Caco-2 (cell line): ENCODE measurements at regions of chrX and their contacts with region 1.

Region 1: GRCh38 chrX:74133156-74133796 is 170.7 kb upstream of the ZCCHC13 start:
- DNase-seq: peak in 1 of 2 experiments; percentile 44
- H3K4me3 ChIP-seq: no peak overlapping the region
- H3K4me3 Mint-ChIP-seq: no peak overlapping the region
- H3K27ac Mint-ChIP-seq: no peak overlapping the region
- H3K4me1 ChIP-seq: no peaks in the 10 kb centered on the region
- H3K4me1 Mint-ChIP-seq: no peaks in the 10 kb centered on the region
- H3K27me3 ChIP-seq: no peaks in the 10 kb centered on the region
- H3K27me3 Mint-ChIP-seq: no peaks in the 10 kb centered on the region
- CTCF ChIP-seq: peak; percentile 39 to 50

Region 2: DNA sequence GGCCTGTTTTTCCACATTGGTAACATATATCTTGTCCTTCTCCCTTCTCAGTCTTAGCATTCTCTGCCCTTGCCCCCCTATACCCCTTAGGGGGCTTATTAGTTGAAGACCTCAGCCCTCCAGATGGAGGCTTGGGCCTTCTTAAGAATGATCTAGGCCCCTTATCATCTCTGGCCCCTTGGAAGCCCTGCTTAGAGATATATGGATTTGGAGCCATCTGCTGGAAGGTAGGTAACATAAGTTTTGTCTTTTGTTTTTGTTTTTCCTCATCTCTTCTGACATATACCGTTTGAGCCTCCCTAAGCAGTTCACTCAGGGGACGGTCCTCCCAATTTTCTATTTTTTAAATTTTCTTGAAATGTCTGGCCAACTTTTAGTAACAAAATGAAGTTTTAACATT is 870.3 kb before region 1 on chrX:
- CTCF ChIA-PET with region 1: no interaction called
- POLR2A ChIA-PET with region 1: no interaction called
- intact Hi-C with region 1: loop called (anchors 5 kb)
- DNase-seq: peak in 1 of 2 experiments; percentile 0
- H3K4me3 ChIP-seq: no peak overlapping the region
- H3K4me3 Mint-ChIP-seq: no peak overlapping the region
- H3K27ac Mint-ChIP-seq: no peak overlapping the region
- H3K4me1 ChIP-seq: no peaks in the 10 kb centered on the region
- H3K4me1 Mint-ChIP-seq: no peaks in the 10 kb centered on the region
- H3K27me3 ChIP-seq: no peaks in the 10 kb centered on the region
- H3K27me3 Mint-ChIP-seq: peaks cover 3% of the 10 kb centered on the region
- CTCF ChIP-seq: peak in 1 of 2 experiments; percentile 0

Region 3: DNA sequence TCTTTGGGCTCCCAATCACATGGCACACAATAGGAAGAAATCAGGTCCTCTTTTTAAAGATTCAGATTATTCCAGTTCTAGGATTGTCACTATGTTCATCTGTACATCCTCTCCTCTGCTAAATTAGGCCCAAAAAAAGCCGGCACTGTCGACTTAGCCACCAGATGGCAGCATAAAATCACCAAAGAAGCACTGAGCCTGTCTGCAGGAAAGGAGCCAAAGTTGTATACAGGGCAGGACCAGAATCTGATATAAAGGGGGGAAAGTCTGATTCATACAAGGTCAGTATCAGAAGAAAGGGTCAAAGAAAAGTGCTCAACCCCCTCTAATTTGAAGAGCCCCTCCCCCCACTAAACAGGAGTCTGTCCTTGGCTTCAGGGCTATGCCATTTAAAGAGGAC is 277.7 kb before region 1 on chrX:
- CTCF ChIA-PET with region 1: no interaction called
- POLR2A ChIA-PET with region 1: no interaction called
- intact Hi-C with region 1: loop called (anchors 1 kb)
- DNase-seq: peak; percentile 43 to 64
- H3K4me3 ChIP-seq: no peak overlapping the region
- H3K4me3 Mint-ChIP-seq: no peak overlapping the region
- H3K27ac Mint-ChIP-seq: no peak overlapping the region
- H3K4me1 ChIP-seq: no peaks in the 10 kb centered on the region
- H3K4me1 Mint-ChIP-seq: no peaks in the 10 kb centered on the region
- H3K27me3 ChIP-seq: no peaks in the 10 kb centered on the region
- H3K27me3 Mint-ChIP-seq: no peaks in the 10 kb centered on the region
- CTCF ChIP-seq: peak; percentile 54 to 56

Region 4: DNA sequence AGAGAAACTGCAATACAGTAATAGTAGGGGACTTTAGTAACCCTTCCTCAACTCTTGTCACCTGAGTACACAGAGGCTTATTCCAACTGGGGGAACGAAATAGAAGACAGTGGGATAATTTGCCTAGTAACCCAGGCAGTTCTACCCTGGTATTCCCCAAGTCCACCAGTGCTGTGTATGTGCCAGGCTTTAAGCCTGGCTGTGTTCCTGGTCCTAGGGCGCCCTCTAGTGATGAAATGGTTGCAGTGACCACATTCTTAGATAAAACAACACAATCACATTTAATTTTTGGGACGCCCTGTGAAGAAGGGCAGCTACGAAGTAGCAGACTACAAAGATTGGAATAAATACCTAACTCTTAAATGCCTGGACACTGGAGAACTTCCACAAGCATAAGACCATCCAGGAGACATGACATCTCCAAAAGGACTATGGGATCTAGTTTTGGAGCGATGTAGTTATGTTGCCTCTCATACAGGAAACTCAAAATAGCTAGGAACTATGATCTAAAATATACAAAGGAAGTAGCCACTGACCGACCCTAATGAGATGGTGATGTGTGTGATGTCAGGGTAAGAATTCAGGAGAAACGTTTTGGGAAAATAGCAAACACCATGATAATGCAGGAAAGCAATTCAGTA is 117.8 kb before region 1 on chrX:
- CTCF ChIA-PET with region 1: no interaction called
- POLR2A ChIA-PET with region 1: no interaction called
- intact Hi-C with region 1: loop called (anchors 1 kb)
- DNase-seq: peak; percentile 48 to 52
- H3K4me3 ChIP-seq: no peak overlapping the region
- H3K4me3 Mint-ChIP-seq: no peak overlapping the region
- H3K27ac Mint-ChIP-seq: no peak overlapping the region
- H3K4me1 ChIP-seq: no peaks in the 10 kb centered on the region
- H3K4me1 Mint-ChIP-seq: peaks cover 4% of the 10 kb centered on the region
- H3K27me3 ChIP-seq: no peaks in the 10 kb centered on the region
- H3K27me3 Mint-ChIP-seq: no peaks in the 10 kb centered on the region
- CTCF ChIP-seq: peak; percentile 65 to 68

Region 5: GRCh38 chrX:74080165-74080564 is 53.1 kb before region 1 on chrX:
- CTCF ChIA-PET with region 1: interaction called, 5 read pairs
- POLR2A ChIA-PET with region 1: no interaction called
- intact Hi-C with region 1: loop called (anchors 10 kb)
- DNase-seq: no peak
- H3K4me3 ChIP-seq: no peak overlapping the region
- H3K4me3 Mint-ChIP-seq: no peak overlapping the region
- H3K27ac Mint-ChIP-seq: no peak overlapping the region
- H3K4me1 ChIP-seq: no peaks in the 10 kb centered on the region
- H3K4me1 Mint-ChIP-seq: no peaks in the 10 kb centered on the region
- H3K27me3 ChIP-seq: no peaks in the 10 kb centered on the region
- H3K27me3 Mint-ChIP-seq: no peaks in the 10 kb centered on the region
- CTCF ChIP-seq: no peak

Region 6: GRCh38 chrX:74291964-74292807 is 158.9 kb after region 1 on chrX:
- CTCF ChIA-PET with region 1: no interaction called
- POLR2A ChIA-PET with region 1: no interaction called
- intact Hi-C with region 1: no loop called
- DNase-seq: peak; percentile 79 to 87
- H3K4me3 ChIP-seq: peak overlapping the region; percentile 78
- H3K4me3 Mint-ChIP-seq: peak overlapping the region; percentile 77
- H3K27ac Mint-ChIP-seq: peak overlapping the region; percentile 83
- H3K4me1 ChIP-seq: no peaks in the 10 kb centered on the region; the same call in 1 of the 2 replicates
- H3K4me1 Mint-ChIP-seq: no peaks in the 10 kb centered on the region
- H3K27me3 ChIP-seq: no peaks in the 10 kb centered on the region
- H3K27me3 Mint-ChIP-seq: no peaks in the 10 kb centered on the region
- CTCF ChIP-seq: peak in 1 of 2 experiments; percentile 38

Region 7: GRCh38 chrX:74550295-74550802 is 417.1 kb after region 1 on chrX:
- CTCF ChIA-PET with region 1: no interaction called
- POLR2A ChIA-PET with region 1: no interaction called
- intact Hi-C with region 1: no loop called
- DNase-seq: peak; percentile 63 to 80
- H3K4me3 ChIP-seq: no peak overlapping the region
- H3K4me3 Mint-ChIP-seq: no peak overlapping the region
- H3K27ac Mint-ChIP-seq: no peak overlapping the region
- H3K4me1 ChIP-seq: no peaks in the 10 kb centered on the region
- H3K4me1 Mint-ChIP-seq: no peaks in the 10 kb centered on the region
- H3K27me3 ChIP-seq: no peaks in the 10 kb centered on the region
- H3K27me3 Mint-ChIP-seq: no peaks in the 10 kb centered on the region
- CTCF ChIP-seq: peak; percentile 92 to 94